ENCODE measurements at regions of chr4 and their contacts with region 1.

Region 1: GRCh38 chr4:86924811-86925210 is 10.0 kb upstream of the AFF1 start:
- DNase-seq: no peak
- H3K4me3 ChIP-seq: no peak overlapping the region
- H3K4me3 Mint-ChIP-seq: no peak overlapping the region
- H3K27ac ChIP-seq: no peak overlapping the region
- H3K27ac Mint-ChIP-seq: peak overlapping the region in 2 of 8 donors; percentile 38 to 70
- H3K4me1 ChIP-seq: no peaks in the 10 kb centered on the region
- H3K4me1 Mint-ChIP-seq: no peaks in the 10 kb centered on the region
- H3K27me3 ChIP-seq: no peaks in the 10 kb centered on the region
- H3K27me3 Mint-ChIP-seq: no peaks in the 10 kb centered on the region

Region 2: DNA sequence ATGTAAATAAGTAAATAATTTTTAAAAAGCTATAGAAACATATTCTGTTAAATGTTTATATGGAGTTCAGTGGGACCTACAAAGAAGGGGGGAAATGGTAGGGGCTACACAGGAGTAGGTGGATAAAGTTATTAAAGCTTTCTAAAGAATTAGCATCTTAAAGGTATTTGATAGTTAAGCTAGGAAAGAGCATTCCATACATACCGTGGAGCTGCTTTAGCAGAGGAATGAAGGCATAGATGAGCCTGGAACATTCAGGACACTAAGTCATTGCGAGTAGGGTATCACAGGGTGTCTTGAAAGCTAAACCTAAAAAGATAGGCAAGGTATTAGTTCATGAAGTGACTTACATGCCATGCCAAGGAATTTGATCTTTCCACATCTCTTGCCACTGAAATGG is 136.0 kb before region 1 on chr4:
- CTCF ChIA-PET with region 1: no interaction called
- POLR2A ChIA-PET with region 1: no interaction called
- DNase-seq: no peak
- H3K4me3 ChIP-seq: no peak overlapping the region
- H3K4me3 Mint-ChIP-seq: no peak overlapping the region
- H3K27ac ChIP-seq: no peak overlapping the region
- H3K27ac Mint-ChIP-seq: no peak overlapping the region
- H3K4me1 ChIP-seq: no peaks in the 10 kb centered on the region
- H3K4me1 Mint-ChIP-seq: no peaks in the 10 kb centered on the region
- H3K27me3 ChIP-seq: no peaks in the 10 kb centered on the region
- H3K27me3 Mint-ChIP-seq: peaks cover 3 to 4% of the 10 kb centered on the region in 2 donors

Region 3: GRCh38 chr4:86934771-86935565 is 10.2 kb after region 1 on chr4 and contains the start of gene AFF1:
- CTCF ChIA-PET with region 1: interaction called, 42 read pairs
- POLR2A ChIA-PET with region 1: interaction called, 3 read pairs
- DNase-seq: peak; percentile 85 to 92 (median 88)
- H3K4me3 ChIP-seq: peak within 1 kb of the TSS; percentile 95
- H3K4me3 Mint-ChIP-seq: peak within 1 kb of the TSS; percentile 92 to 96 (median 93)
- H3K27ac ChIP-seq: peak within 1 kb of the TSS; percentile 83
- H3K27ac Mint-ChIP-seq: peak within 1 kb of the TSS; percentile 90 to 98 (median 97)
- H3K4me1 ChIP-seq: peaks cover 45% of the 10 kb centered on the region
- H3K4me1 Mint-ChIP-seq: peaks cover 48 to 56% (median 54%) of the 10 kb centered on the region in 3 donors
- H3K27me3 ChIP-seq: no peaks in the 10 kb centered on the region
- H3K27me3 Mint-ChIP-seq: no peaks in the 10 kb centered on the region
- total RNA-seq, gene AFF1: 29.7 to 32.9 TPM

Region 4: GRCh38 chr4:87006676-87007527 is 82.1 kb after region 1 on chr4:
- CTCF ChIA-PET with region 1: interaction called, 21 read pairs
- POLR2A ChIA-PET with region 1: interaction called, 7 read pairs
- DNase-seq: peak; percentile 81 to 92 (median 89)
- H3K4me3 ChIP-seq: peak overlapping the region; percentile 94
- H3K4me3 Mint-ChIP-seq: peak overlapping the region; percentile 92 to 95 (median 93)
- H3K27ac ChIP-seq: peak overlapping the region; percentile 85
- H3K27ac Mint-ChIP-seq: peak overlapping the region; percentile 94 to 100 (median 98)
- H3K4me1 ChIP-seq: peaks cover 53% of the 10 kb centered on the region
- H3K4me1 Mint-ChIP-seq: peaks cover 52 to 65% (median 63%) of the 10 kb centered on the region in 3 donors
- H3K27me3 ChIP-seq: no peaks in the 10 kb centered on the region
- H3K27me3 Mint-ChIP-seq: no peaks in the 10 kb centered on the region

Region 5: DNA sequence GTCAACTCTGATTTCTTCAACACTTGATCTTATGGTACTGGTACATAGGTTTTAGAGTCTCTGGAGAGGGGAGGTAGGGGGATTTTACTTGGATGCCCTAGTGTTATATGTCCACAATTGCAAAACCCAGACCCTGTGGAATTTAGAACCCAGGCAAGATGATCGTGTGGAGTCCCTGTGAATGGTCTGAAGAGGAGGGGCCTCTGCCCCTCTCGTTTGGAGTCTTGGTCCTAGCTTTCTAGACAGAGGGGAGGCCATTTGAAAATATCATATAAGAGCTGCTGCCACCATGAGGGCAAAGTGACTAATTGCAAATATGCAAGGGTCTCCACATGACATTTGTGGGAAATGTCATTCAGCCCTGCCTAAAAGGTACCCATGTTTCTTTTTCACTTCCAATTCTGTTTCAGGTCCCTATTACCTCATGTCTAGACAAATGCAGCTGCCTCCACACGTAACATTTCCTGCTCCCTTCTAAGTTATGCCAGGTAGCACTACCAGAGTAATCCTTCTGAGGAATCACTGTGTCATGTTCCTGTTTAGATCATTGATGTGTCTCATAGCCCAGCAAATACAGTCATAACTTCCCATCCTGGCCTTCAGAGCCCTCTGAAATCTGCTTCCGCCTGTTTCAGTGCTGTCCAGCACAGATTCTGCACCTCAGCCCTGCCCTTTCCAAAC is 168.8 kb after region 1 on chr4:
- CTCF ChIA-PET with region 1: interaction called, 133 read pairs
- POLR2A ChIA-PET with region 1: interaction called, 8 read pairs
- DNase-seq: peak in 4 of 5 donors; percentile 5 to 58 (median 39)
- H3K4me3 ChIP-seq: no peak overlapping the region
- H3K4me3 Mint-ChIP-seq: no peak overlapping the region
- H3K27ac ChIP-seq: no peak overlapping the region
- H3K27ac Mint-ChIP-seq: peak overlapping the region; percentile 11 to 82 (median 30)
- H3K4me1 ChIP-seq: peaks cover 4% of the 10 kb centered on the region
- H3K4me1 Mint-ChIP-seq: peaks cover 8 to 18% (median 16%) of the 10 kb centered on the region in 3 donors
- H3K27me3 ChIP-seq: no peaks in the 10 kb centered on the region
- H3K27me3 Mint-ChIP-seq: no peaks in the 10 kb centered on the region

Region 6: GRCh38 chr4:87103691-87104187 is 178.9 kb after region 1 on chr4:
- CTCF ChIA-PET with region 1: interaction called, 16 read pairs
- POLR2A ChIA-PET with region 1: no interaction called
- DNase-seq: peak in 2 of 5 donors; percentile 55 to 64
- H3K4me3 ChIP-seq: peak overlapping the region; percentile 24
- H3K4me3 Mint-ChIP-seq: peak overlapping the region in 6 of 7 donors; percentile 29 to 69 (median 48)
- H3K27ac ChIP-seq: no peak overlapping the region
- H3K27ac Mint-ChIP-seq: peak overlapping the region; percentile 64 to 92 (median 80)
- H3K4me1 ChIP-seq: peaks cover 27% of the 10 kb centered on the region
- H3K4me1 Mint-ChIP-seq: peaks cover 34 to 60% (median 59%) of the 10 kb centered on the region in 3 donors
- H3K27me3 ChIP-seq: no peaks in the 10 kb centered on the region
- H3K27me3 Mint-ChIP-seq: no peaks in the 10 kb centered on the region

Region 7: DNA sequence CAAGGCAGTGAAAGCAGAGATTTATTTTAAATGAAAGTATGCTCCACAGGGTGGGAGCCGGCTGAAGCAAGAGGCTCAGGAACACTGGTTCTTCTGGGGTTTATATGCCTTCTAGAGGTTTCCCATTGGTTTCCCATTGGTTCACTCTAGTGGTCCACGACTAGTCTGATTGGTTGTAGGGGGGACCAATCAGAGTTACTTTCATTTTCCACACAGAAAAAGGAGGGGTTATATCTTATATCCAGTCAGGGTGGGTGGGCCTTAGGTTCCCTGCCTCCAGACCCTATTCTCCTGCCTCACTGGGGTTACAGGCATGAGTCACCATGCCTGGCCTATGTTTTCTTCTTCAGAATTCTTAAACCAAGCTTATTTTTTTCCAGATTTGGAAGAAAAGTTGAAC is 194.0 kb after region 1 on chr4:
- CTCF ChIA-PET with region 1: interaction called, 10 read pairs
- POLR2A ChIA-PET with region 1: no interaction called
- DNase-seq: no peak
- H3K4me3 ChIP-seq: no peak overlapping the region
- H3K4me3 Mint-ChIP-seq: no peak overlapping the region
- H3K27ac ChIP-seq: no peak overlapping the region
- H3K27ac Mint-ChIP-seq: peak overlapping the region in 2 of 8 donors; percentile 37 to 72
- H3K4me1 ChIP-seq: no peaks in the 10 kb centered on the region
- H3K4me1 Mint-ChIP-seq: peaks cover 20 to 33% (median 31%) of the 10 kb centered on the region in 3 donors
- H3K27me3 ChIP-seq: no peaks in the 10 kb centered on the region
- H3K27me3 Mint-ChIP-seq: no peaks in the 10 kb centered on the region

Region 8: DNA sequence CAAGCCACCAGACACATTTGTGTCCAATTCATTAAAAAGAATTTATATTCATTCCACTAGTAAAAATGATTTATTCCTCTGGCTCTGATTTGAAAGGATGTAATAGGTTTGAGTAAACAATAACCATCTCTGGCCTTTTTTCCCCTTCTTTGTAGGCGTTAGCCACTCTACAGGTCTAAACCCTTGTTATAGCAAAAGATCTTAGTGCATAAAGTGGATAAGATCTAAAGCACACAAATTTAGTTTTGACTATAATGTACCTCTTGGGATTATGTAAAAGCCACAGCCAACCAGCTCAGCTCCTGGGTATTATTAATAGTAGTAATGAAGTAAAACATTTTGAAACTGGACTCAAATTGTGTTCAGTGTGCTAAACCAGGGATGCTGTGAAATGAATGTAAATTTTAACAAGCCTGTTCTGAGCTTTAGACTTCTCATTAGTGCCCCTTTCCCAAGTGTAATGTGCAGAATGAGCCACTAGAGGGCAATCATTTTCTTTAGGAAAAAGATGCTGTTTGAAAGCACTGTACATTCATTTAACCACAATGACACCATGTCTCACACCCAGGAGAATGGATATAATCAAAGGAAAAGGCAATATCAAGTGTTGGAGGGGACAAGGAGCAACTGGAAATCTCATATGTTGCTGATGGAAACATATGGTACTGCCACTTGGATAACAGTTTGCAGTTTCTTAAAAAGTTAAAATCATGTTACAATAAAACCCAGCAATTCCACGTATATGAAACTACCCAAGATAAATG is 225.9 kb after region 1 on chr4:
- CTCF ChIA-PET with region 1: interaction called, 17 read pairs
- POLR2A ChIA-PET with region 1: no interaction called
- DNase-seq: peak; percentile 14 to 56 (median 42)
- H3K4me3 ChIP-seq: no peak overlapping the region
- H3K4me3 Mint-ChIP-seq: no peak overlapping the region
- H3K27ac ChIP-seq: no peak overlapping the region
- H3K27ac Mint-ChIP-seq: peak overlapping the region in 1 of 8 donors; percentile 1
- H3K4me1 ChIP-seq: no peaks in the 10 kb centered on the region
- H3K4me1 Mint-ChIP-seq: no peaks in the 10 kb centered on the region
- H3K27me3 ChIP-seq: no peaks in the 10 kb centered on the region
- H3K27me3 Mint-ChIP-seq: no peaks in the 10 kb centered on the region

Region 9: GRCh38 chr4:87433342-87433741 is 508.5 kb after region 1 on chr4:
- CTCF ChIA-PET with region 1: no interaction called
- POLR2A ChIA-PET with region 1: no interaction called
- DNase-seq: no peak
- H3K4me3 ChIP-seq: no peak overlapping the region
- H3K4me3 Mint-ChIP-seq: no peak overlapping the region
- H3K27ac ChIP-seq: no peak overlapping the region
- H3K27ac Mint-ChIP-seq: peak overlapping the region in 1 of 8 donors; percentile 4
- H3K4me1 ChIP-seq: no peaks in the 10 kb centered on the region
- H3K4me1 Mint-ChIP-seq: peaks cover 43 to 49% (median 49%) of the 10 kb centered on the region in 3 donors
- H3K27me3 ChIP-seq: no peaks in the 10 kb centered on the region
- H3K27me3 Mint-ChIP-seq: no peaks in the 10 kb centered on the region

Measured in CD8-positive, alpha-beta memory T cell (primary cell).